ENCODE measurements at regions of chr16 and their contacts with region 1.

Region 1: GRCh38 chr16:21253470-21253869 is 20.0 kb downstream of the ANKS4B start:
- DNase-seq: no peak
- H3K4me3 ChIP-seq: no peak overlapping the region
- CTCF ChIP-seq: no peak

Region 2: GRCh38 chr16:21009815-21010214 is 243.7 kb before region 1 on chr16:
- in situ Hi-C with region 1: loop called (anchors 10 kb)
- DNase-seq: no peak
- H3K4me3 ChIP-seq: no peak overlapping the region
- CTCF ChIP-seq: no peak